ENCODE measurements at regions of chr7 and their contacts with region 1.

Region 1: DNA sequence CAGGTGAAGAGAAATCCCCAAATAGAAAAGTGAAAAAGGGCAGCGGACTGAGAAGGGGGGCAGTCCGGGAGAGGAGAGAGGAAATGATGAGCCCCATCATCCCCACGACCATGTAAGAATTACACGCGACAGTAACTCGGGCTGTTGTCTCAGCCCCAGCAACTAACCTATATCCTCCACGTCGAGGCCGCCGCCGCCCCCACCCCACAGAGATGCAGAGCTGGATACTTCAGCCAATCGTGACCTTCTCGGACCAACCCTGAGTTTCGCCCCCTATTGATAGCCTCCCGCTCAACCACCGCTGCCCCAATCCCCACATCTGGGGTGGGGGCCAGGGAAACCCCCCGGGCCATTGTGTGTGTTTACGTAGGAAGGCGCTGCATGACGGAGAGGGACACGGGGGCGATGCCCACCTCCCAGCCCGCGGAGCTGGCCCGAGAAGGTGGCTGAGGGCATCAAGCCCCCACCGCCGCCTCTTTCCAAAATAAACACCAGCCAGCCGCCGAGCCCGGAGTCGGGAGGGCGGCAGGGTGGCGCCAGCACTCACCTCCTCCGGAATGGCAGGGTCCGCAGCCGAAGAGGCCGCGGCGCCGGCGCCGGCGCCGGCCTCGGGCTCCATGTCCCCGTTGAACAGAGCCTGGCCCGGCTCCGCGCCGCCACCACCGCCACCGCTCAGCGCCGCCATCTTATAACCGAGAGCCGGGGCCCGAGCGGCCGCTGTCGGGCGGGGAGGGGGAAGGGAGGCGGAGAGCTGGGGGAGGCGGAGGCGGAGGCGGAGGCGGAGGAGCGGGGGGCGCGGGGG is 509 bp downstream of the BRAF start:
- DNase-seq: peak; percentile 80
- H3K4me3 ChIP-seq: peak overlapping the region; percentile 92
- H3K27ac ChIP-seq: peak overlapping the region; percentile 73
- H3K4me1 ChIP-seq: peaks cover 36% of the 10 kb centered on the region
- CTCF ChIP-seq: peak; percentile 76

Region 2: DNA sequence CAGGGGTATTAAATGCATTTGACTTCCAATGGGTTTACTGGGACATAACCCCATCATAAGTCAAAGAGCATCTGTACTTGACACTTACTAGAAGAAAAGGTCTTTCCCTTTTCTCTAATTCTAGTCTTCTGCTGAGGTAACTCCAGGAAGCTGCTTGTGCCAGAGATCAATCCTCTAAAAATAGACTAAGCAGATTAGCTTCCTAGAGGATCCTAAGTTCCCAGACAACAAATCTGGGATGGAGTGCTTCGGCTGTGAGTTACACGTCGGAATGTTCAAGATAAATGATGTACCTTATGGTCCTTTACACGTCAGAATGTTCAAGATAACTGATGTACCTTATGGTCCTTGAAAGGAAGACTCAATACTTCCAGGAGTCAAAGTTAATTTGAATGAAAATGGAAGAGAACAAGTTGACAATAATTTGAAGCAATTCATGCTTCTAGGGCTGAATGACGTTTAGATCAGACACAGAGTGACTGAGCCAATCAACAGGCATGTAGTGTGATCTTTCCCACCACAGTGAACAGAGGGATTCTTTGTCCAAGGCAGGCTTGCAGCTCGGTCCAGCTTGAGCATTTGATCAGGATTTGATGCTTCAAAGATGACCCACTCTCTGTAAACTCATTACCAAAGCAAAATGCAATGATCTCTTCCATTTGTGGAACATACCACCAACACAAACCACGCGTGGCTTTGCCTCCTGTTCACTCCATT is 589.7 kb before region 1 on chr7:
- CTCF ChIA-PET with region 1: no interaction called
- POLR2A ChIA-PET with region 1: no interaction called
- intact Hi-C with region 1: no loop called
- DNase-seq: no peak
- H3K4me3 ChIP-seq: no peak overlapping the region
- H3K27ac ChIP-seq: no peak overlapping the region
- H3K4me1 ChIP-seq: no peaks in the 10 kb centered on the region
- CTCF ChIP-seq: no peak

Region 3: GRCh38 chr7:140696680-140697446 is 227.4 kb before region 1 on chr7 and contains the start of gene NDUFB2:
- CTCF ChIA-PET with region 1: no interaction called
- POLR2A ChIA-PET with region 1: interaction called, 3 read pairs
- intact Hi-C with region 1: loop called (anchors 1 kb)
- DNase-seq: peak; percentile 81
- H3K4me3 ChIP-seq: peak within 1 kb of the TSS; percentile 77
- H3K27ac ChIP-seq: peak within 1 kb of the TSS; percentile 66
- H3K4me1 ChIP-seq: peaks cover 21% of the 10 kb centered on the region
- CTCF ChIP-seq: peak; percentile 33; the same call in 1 of the 2 replicates
- total RNA-seq, gene NDUFB2: 139 and 158 TPM in 2 replicates

Region 4: DNA sequence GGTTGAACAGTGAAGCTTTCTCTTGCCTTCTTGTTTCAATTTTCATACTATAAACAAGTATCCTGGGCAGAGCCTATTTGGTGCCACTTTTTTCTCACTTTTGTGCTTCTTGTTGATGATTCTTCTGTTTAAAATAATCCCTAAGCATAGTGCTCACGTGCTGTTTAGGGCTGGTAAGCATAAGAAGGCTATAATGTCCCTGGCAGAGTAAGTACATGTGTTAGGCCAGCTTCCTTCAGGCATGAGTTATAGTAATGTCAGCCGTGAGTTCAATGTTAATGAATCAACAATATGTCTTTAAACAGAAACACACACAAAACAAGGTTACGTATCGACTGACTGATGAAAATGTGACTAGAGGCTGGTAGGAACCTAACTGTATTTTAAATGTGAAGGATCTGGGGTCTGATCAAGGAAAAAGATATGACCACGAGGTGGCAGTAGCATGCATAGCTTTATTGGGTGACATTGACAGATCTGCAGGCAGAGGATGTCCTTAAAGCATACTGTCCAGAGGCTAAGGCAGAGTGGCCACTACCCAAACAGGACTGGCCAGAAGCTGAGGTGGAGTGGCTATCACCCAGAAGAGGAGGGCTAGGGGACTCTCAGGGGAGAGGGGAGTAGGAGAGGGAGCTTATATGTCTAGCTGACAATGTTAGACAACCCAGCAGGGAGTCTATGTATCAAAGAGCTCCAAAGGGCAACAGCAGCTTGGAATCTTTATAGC is 113.2 kb before region 1 on chr7:
- CTCF ChIA-PET with region 1: interaction called, 7 read pairs
- POLR2A ChIA-PET with region 1: interaction called, 3 read pairs
- intact Hi-C with region 1: loop called (anchors 2 kb)
- DNase-seq: peak; percentile 69
- H3K4me3 ChIP-seq: no peak overlapping the region
- H3K27ac ChIP-seq: no peak overlapping the region
- H3K4me1 ChIP-seq: no peaks in the 10 kb centered on the region
- CTCF ChIP-seq: peak; percentile 90

Measured in OCI-LY7 (cell line).